Sigmoid colon (tissue), 7 donors: ENCODE measurements at regions of chr2 and their contacts with region 1.

Region 1: DNA sequence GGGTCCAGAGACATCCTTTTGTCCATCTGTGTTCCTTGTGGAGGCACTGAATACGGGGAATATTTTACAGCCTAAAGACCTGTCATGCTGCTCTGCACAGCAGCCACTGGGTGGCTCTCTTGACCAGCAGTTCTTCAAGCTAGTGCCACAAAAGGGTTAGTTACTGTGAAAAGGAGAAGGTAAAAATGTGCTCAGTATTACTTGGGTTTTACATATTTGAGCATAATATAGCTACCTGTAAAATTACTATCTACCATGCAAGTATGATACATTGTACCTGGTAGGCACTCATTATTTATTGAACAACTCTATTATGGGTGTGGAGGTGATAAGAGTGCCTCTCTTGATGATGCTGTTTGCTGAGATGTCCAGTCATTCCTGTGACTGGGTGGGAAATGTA is 23.6 kb downstream of the FZD5 start:
- DNase-seq: no peak
- H3K4me3 ChIP-seq: no peak overlapping the region
- H3K27ac ChIP-seq: no peak overlapping the region
- H3K4me1 ChIP-seq: peaks cover 0 to 4% (median 0%) of the 10 kb centered on the region in 4 donors
- H3K27me3 ChIP-seq: no peaks in the 10 kb centered on the region
- CTCF ChIP-seq: peak; percentile 69 to 87 (median 80)
- EP300 ChIP-seq: no peak
- POLR2A ChIP-seq: no peak

Region 2: GRCh38 chr2:207710814-207711740 is 35.1 kb before region 1 on chr2 and contains the start of gene CCNYL1:
- intact Hi-C with region 1: no loop called
- DNase-seq: peak; percentile 100
- H3K4me3 ChIP-seq: peak within 1 kb of the TSS; percentile 77 to 98 (median 89)
- H3K27ac ChIP-seq: peak within 1 kb of the TSS; percentile 91 to 95 (median 92)
- H3K4me1 ChIP-seq: peaks cover 0 to 25% (median 21%) of the 10 kb centered on the region in 4 donors
- H3K27me3 ChIP-seq: no peaks in the 10 kb centered on the region
- CTCF ChIP-seq: peak in 3 of 4 experiments; percentile 18 to 41 (median 23)
- EP300 ChIP-seq: no peak
- POLR2A ChIP-seq: peak; percentile 38 to 69
- total RNA-seq, gene CCNYL1: 9.2 to 17.8 (median 11.5) TPM

Region 3: GRCh38 chr2:208072250-208072892 is 326.2 kb after region 1 on chr2:
- intact Hi-C with region 1: loop called (anchors 2 kb)
- DNase-seq: peak; percentile 78
- H3K4me3 ChIP-seq: no peak overlapping the region
- H3K27ac ChIP-seq: no peak overlapping the region
- H3K4me1 ChIP-seq: no peaks in the 10 kb centered on the region
- H3K27me3 ChIP-seq: no peaks in the 10 kb centered on the region
- CTCF ChIP-seq: peak; percentile 31 to 80 (median 56)
- EP300 ChIP-seq: no peak
- POLR2A ChIP-seq: no peak